Calu3 (cell line): ENCODE measurements at regions of chr1 and their contacts with region 1.

Region 1: DNA sequence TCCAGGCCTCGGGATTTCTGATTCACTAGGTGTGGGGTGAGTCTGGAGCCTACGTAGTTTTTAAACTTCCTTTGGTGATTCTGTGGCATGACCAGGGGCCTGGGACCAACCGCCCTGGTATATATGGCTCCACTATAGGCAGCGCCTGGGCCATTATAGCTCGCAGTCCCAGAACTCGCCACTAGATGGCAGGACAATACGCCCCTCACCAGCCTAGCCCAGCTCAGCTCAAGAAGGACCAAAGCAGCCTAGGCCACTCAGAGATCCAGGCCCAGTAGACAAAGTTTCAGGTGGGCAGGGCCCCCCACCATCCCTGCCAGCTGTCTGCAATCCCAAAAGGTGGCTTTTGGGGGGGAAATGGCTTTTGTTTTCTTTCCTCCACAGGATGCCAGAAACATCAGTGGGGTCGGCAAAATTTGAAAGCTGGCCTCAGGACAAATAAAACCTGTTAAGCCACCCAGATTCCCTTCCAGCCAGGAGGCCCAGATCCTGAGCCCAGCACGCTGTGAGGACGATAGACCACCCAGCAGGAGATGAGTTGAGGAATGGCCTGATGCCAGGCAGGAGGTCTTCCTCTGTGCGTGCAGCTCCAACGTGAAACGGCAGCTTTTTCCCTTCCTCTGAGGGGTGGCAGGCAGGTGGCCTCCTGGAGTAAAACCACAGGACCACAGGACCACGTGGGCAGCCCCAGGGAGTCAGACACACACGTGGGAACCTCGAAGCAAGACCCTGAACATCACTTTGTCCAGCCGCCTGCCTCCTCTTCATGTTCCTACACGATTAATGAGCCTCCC is 24.8 kb upstream of the TMEM51 start:
- DNase-seq: peak; percentile 66
- H3K4me3 Mint-ChIP-seq: no peak overlapping the region
- H3K27ac Mint-ChIP-seq: no peak overlapping the region
- H3K4me1 Mint-ChIP-seq: no peaks in the 10 kb centered on the region
- H3K27me3 Mint-ChIP-seq: no peaks in the 10 kb centered on the region
- CTCF ChIP-seq: peak; percentile 63

Region 2: GRCh38 chr1:15100121-15100874 is 28.4 kb before region 1 on chr1:
- CTCF ChIA-PET with region 1: no interaction called
- intact Hi-C with region 1: no loop called
- DNase-seq: peak; percentile 70
- H3K4me3 Mint-ChIP-seq: no peak overlapping the region
- H3K27ac Mint-ChIP-seq: no peak overlapping the region
- H3K4me1 Mint-ChIP-seq: peaks cover 21% of the 10 kb centered on the region
- H3K27me3 Mint-ChIP-seq: peaks cover 40% of the 10 kb centered on the region
- CTCF ChIP-seq: peak; percentile 85

Region 3: DNA sequence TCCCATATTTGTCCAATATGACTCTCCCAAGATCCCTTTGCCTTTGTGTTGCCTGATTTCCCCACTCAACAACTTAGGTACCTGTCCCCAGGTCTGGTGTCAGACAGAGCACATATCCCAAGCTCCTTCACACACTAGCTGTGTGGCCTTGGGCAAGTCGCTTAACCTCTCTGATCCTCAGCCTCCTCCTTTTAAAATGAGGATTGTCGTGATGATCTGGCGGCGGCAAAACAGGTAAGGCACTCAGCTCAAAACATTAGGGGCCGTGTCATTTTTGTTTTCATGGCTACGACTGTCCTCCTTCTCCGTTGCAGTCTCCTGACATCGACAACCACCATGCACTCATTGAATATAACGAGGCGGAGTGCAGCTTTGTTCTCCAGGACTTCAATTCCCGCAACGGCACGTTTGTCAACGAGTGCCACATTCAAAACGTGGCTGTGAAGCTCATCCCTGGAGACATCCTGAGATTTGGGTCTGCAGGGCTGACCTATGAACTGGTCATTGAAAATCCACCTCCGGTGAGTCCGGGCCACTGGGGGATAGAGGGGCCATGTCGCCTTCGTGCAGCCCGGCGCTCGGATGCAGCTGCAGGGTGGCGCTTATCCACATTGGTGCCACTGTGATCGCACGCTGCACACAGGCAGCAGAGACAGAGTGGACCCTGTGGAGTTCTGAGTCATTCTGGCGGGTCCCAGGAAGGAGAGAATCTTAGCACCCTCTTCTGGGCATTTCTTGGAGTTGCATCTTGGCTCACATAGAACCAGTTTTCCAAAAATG is 143.5 kb after region 1 on chr1:
- CTCF ChIA-PET with region 1: interaction called, 11 read pairs
- intact Hi-C with region 1: loop called (anchors 1 kb)
- DNase-seq: peak; percentile 60
- H3K4me3 Mint-ChIP-seq: no peak overlapping the region
- H3K27ac Mint-ChIP-seq: no peak overlapping the region
- H3K4me1 Mint-ChIP-seq: no peaks in the 10 kb centered on the region
- H3K27me3 Mint-ChIP-seq: no peaks in the 10 kb centered on the region
- CTCF ChIP-seq: peak; percentile 65

Region 4: GRCh38 chr1:15304701-15305467 is 176.2 kb after region 1 on chr1:
- CTCF ChIA-PET with region 1: interaction called, 8 read pairs
- intact Hi-C with region 1: loop called (anchors 1 kb)
- DNase-seq: peak; percentile 74
- H3K4me3 Mint-ChIP-seq: no peak overlapping the region
- H3K27ac Mint-ChIP-seq: no peak overlapping the region
- H3K4me1 Mint-ChIP-seq: no peaks in the 10 kb centered on the region
- H3K27me3 Mint-ChIP-seq: peaks cover 11% of the 10 kb centered on the region
- CTCF ChIP-seq: peak; percentile 92